ENCODE measurements at regions of chr1 and their contacts with region 1.

Region 1: DNA sequence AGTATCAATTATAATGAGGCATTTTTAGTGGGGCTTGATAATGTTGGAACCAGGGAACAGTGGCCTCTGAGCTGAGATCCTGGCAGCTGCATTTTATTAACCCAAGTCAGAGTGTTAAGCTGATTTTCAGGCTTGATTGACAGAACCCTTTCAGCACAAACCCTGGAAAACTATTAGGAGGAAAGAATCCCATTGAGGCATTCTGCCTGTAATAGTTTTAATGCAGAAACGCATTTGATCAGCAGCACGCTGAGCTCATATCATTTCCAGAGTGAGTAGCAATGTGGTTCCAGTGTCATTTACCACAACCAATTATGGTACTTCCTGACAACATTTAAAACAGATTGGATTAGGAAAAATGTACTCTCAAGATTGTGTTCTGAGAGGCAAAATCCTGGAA is 78.3 kb upstream of the BARHL2 start:
- DNase-seq: no peak
- ATAC-seq: no peak
- H3K4me3 ChIP-seq: no peak overlapping the region
- H3K4me3 Mint-ChIP-seq: no peak overlapping the region
- H3K27ac ChIP-seq: no peak overlapping the region
- H3K27ac Mint-ChIP-seq: no peak overlapping the region
- H3K4me1 ChIP-seq: no peaks in the 10 kb centered on the region
- H3K4me1 Mint-ChIP-seq: no peaks in the 10 kb centered on the region
- H3K27me3 ChIP-seq: peaks cover 2 to 7% of the 10 kb centered on the region in 2 experiments
- H3K27me3 Mint-ChIP-seq: peaks cover 26 to 51% of the 10 kb centered on the region in 2 donors

Region 2: DNA sequence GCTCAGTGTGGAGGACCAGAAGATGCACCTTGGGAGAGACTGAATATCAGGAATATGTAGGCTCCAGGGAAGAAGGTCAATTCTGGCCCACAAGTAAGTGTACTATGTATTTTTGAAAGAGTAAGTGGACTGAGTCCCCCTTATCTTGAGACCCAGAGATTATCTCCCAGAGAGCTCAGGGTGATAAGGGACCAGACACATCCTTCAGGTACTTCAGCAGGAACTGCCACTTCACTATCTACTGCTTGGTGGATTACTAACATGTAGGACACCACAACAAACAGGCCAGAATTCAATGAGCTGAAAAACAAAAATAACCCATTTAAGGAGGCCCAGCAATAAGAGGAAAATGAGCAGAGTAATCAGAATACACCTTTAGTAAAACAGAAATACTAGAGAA is 107.2 kb after region 1 on chr1:
- CTCF ChIA-PET with region 1: no interaction called
- POLR2A ChIA-PET with region 1: no interaction called
- DNase-seq: no peak
- ATAC-seq: no peak
- H3K4me3 ChIP-seq: no peak overlapping the region
- H3K4me3 Mint-ChIP-seq: no peak overlapping the region
- H3K27ac ChIP-seq: no peak overlapping the region
- H3K27ac Mint-ChIP-seq: no peak overlapping the region
- H3K4me1 ChIP-seq: no peaks in the 10 kb centered on the region
- H3K4me1 Mint-ChIP-seq: peaks cover 0 to 23% (median 7%) of the 10 kb centered on the region in 3 donors
- H3K27me3 ChIP-seq: no peaks in the 10 kb centered on the region
- H3K27me3 Mint-ChIP-seq: no peaks in the 10 kb centered on the region

Region 3: GRCh38 chr1:91038582-91038981 is 243.2 kb after region 1 on chr1:
- CTCF ChIA-PET with region 1: no interaction called
- POLR2A ChIA-PET with region 1: interaction called in 1 of 2 experiments, 14 read pairs
- DNase-seq: no peak
- ATAC-seq: no peak
- H3K4me3 ChIP-seq: no peak overlapping the region
- H3K4me3 Mint-ChIP-seq: no peak overlapping the region
- H3K27ac ChIP-seq: no peak overlapping the region
- H3K27ac Mint-ChIP-seq: no peak overlapping the region
- H3K4me1 ChIP-seq: no peaks in the 10 kb centered on the region
- H3K4me1 Mint-ChIP-seq: no peaks in the 10 kb centered on the region
- H3K27me3 ChIP-seq: peaks cover 0 to 3% of the 10 kb centered on the region in 2 experiments
- H3K27me3 Mint-ChIP-seq: peaks cover 0 to 6% of the 10 kb centered on the region in 2 donors

Measured in T-cell (primary cell).